ENCODE measurements at regions of chr2 and their contacts with region 1.

Region 1: GRCh38 chr2:46601328-46601963 is 122.1 kb downstream of the TMEM247 start:
- DNase-seq: peak; percentile 52
- ATAC-seq: peak; percentile 45
- H3K4me3 ChIP-seq: no peak overlapping the region
- H3K4me3 Mint-ChIP-seq: no peak overlapping the region
- H3K27ac ChIP-seq: no peak overlapping the region
- H3K27ac Mint-ChIP-seq: no peak overlapping the region
- H3K4me1 ChIP-seq: peaks cover 0 to 3% of the 10 kb centered on the region in 2 donors
- H3K4me1 Mint-ChIP-seq: peaks cover 2% of the 10 kb centered on the region
- H3K27me3 ChIP-seq: no peaks in the 10 kb centered on the region
- H3K27me3 Mint-ChIP-seq: no peaks in the 10 kb centered on the region
- CTCF ChIP-seq: peak; percentile 80

Region 2: DNA sequence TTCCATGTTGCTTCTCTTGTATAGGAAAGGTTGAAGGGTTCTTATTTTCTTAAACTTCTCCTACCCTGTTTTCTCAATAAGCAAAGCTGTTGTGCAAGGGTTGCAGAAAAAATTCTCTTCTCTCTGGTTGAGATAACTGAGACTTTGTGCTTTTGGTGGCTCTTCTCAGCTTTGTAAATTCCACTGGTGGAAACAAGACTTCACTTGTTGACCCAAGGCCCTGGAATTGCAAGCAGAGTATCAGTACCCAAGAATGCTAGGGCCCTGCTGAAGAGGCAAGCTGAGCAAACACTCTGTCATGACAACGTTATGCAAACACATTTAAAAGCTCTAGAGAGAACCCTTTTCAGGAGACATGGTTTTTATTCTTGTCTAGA is 599.0 kb before region 1 on chr2:
- CTCF ChIA-PET with region 1: no interaction called
- POLR2A ChIA-PET with region 1: no interaction called
- intact Hi-C with region 1: no loop called
- DNase-seq: no peak
- ATAC-seq: no peak
- H3K4me3 ChIP-seq: no peak overlapping the region
- H3K4me3 Mint-ChIP-seq: no peak overlapping the region
- H3K27ac ChIP-seq: no peak overlapping the region
- H3K27ac Mint-ChIP-seq: no peak overlapping the region
- H3K4me1 ChIP-seq: no peaks in the 10 kb centered on the region
- H3K4me1 Mint-ChIP-seq: no peaks in the 10 kb centered on the region
- H3K27me3 ChIP-seq: no peaks in the 10 kb centered on the region
- H3K27me3 Mint-ChIP-seq: no peaks in the 10 kb centered on the region
- CTCF ChIP-seq: no peak

Region 3: GRCh38 chr2:46547223-46548102 is 54.0 kb before region 1 on chr2:
- CTCF ChIA-PET with region 1: interaction called, 10 read pairs
- POLR2A ChIA-PET with region 1: no interaction called
- intact Hi-C with region 1: no loop called
- DNase-seq: peak; percentile 40
- ATAC-seq: no peak
- H3K4me3 ChIP-seq: peak overlapping the region; percentile 11 to 54 (median 30)
- H3K4me3 Mint-ChIP-seq: peak overlapping the region; percentile 71
- H3K27ac ChIP-seq: peak overlapping the region; percentile 74 to 75
- H3K27ac Mint-ChIP-seq: peak overlapping the region; percentile 93
- H3K4me1 ChIP-seq: peaks cover 81 to 87% of the 10 kb centered on the region in 2 donors
- H3K4me1 Mint-ChIP-seq: peaks cover 86% of the 10 kb centered on the region
- H3K27me3 ChIP-seq: no peaks in the 10 kb centered on the region
- H3K27me3 Mint-ChIP-seq: no peaks in the 10 kb centered on the region
- CTCF ChIP-seq: no peak

Region 4: GRCh38 chr2:46569061-46569560 is 32.3 kb before region 1 on chr2:
- CTCF ChIA-PET with region 1: interaction called, 6 read pairs
- POLR2A ChIA-PET with region 1: no interaction called
- intact Hi-C with region 1: loop called (anchors 1 kb)
- DNase-seq: peak; percentile 88
- ATAC-seq: peak; percentile 85
- H3K4me3 ChIP-seq: peak overlapping the region in 4 of 5 experiments; percentile 2 to 55 (median 16)
- H3K4me3 Mint-ChIP-seq: peak overlapping the region; percentile 86
- H3K27ac ChIP-seq: peak overlapping the region; percentile 95 to 98
- H3K27ac Mint-ChIP-seq: peak overlapping the region; percentile 100
- H3K4me1 ChIP-seq: peaks cover 100% of the 10 kb centered on the region in 2 donors
- H3K4me1 Mint-ChIP-seq: peaks cover 95% of the 10 kb centered on the region
- H3K27me3 ChIP-seq: no peaks in the 10 kb centered on the region
- H3K27me3 Mint-ChIP-seq: no peaks in the 10 kb centered on the region
- CTCF ChIP-seq: no peak

Region 5: GRCh38 chr2:46589358-46589757 is 12.1 kb before region 1 on chr2:
- CTCF ChIA-PET with region 1: interaction called, 10 read pairs
- POLR2A ChIA-PET with region 1: no interaction called
- intact Hi-C with region 1: no loop called
- DNase-seq: no peak
- ATAC-seq: no peak
- H3K4me3 ChIP-seq: no peak overlapping the region
- H3K4me3 Mint-ChIP-seq: no peak overlapping the region
- H3K27ac ChIP-seq: peak overlapping the region in 1 of 2 donors; percentile 59
- H3K27ac Mint-ChIP-seq: no peak overlapping the region
- H3K4me1 ChIP-seq: no peaks in the 10 kb centered on the region
- H3K4me1 Mint-ChIP-seq: peaks cover 4% of the 10 kb centered on the region
- H3K27me3 ChIP-seq: no peaks in the 10 kb centered on the region
- H3K27me3 Mint-ChIP-seq: no peaks in the 10 kb centered on the region
- CTCF ChIP-seq: no peak

Region 6: DNA sequence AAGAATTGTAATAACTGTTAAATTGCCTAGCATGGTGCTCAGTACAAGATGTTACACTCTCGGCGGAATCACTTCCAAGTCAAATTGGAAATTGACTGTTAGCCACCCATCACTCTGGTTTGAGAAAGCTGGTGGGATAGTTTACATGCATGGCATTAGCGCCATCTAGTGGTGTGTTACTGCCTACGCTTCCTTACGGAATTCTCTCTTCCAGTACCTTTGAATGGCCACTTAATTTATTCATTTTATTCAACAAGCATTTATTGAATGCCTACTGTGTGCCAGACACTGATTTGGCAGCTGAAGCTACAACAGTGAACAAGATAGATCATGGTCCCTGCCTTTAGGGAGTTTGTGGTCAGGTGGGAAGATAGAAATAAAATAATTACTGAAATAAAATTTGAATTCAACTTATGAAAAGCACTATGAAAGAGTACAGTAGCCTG is 49.1 kb after region 1 on chr2:
- CTCF ChIA-PET with region 1: interaction called, 11 read pairs
- POLR2A ChIA-PET with region 1: no interaction called
- intact Hi-C with region 1: no loop called
- DNase-seq: peak; percentile 83
- ATAC-seq: peak; percentile 70
- H3K4me3 ChIP-seq: no peak overlapping the region
- H3K4me3 Mint-ChIP-seq: no peak overlapping the region
- H3K27ac ChIP-seq: no peak overlapping the region
- H3K27ac Mint-ChIP-seq: no peak overlapping the region
- H3K4me1 ChIP-seq: no peaks in the 10 kb centered on the region
- H3K4me1 Mint-ChIP-seq: no peaks in the 10 kb centered on the region
- H3K27me3 ChIP-seq: no peaks in the 10 kb centered on the region
- H3K27me3 Mint-ChIP-seq: peaks cover 6% of the 10 kb centered on the region
- CTCF ChIP-seq: peak; percentile 97

Measured in B cell (primary cell).